Activated CD4-positive, alpha-beta T cell treated with anti-CD3 and anti-CD28 coated beads for 36 hours (primary cell): ENCODE measurements at regions of chr5 and their contacts with region 1.

Region 1: GRCh38 chr5:60699530-60700382 is at the start of gene DEPDC1B:
- DNase-seq: peak; percentile 94
- ATAC-seq: peak; percentile 97
- H3K4me3 Mint-ChIP-seq: peak within 1 kb of the TSS; percentile 84
- H3K27ac Mint-ChIP-seq: peak within 1 kb of the TSS; percentile 88
- H3K4me1 Mint-ChIP-seq: peaks cover 16% of the 10 kb centered on the region
- H3K27me3 Mint-ChIP-seq: peaks cover 2% of the 10 kb centered on the region
- total RNA-seq, gene DEPDC1B: 34.2 to 40.3 TPM

Region 2: GRCh38 chr5:60066502-60066901 is 633.3 kb before region 1 on chr5:
- CTCF ChIA-PET with region 1: no interaction called
- POLR2A ChIA-PET with region 1: no interaction called
- intact Hi-C with region 1: no loop called
- DNase-seq: no peak
- ATAC-seq: no peak
- H3K4me3 Mint-ChIP-seq: no peak overlapping the region
- H3K27ac Mint-ChIP-seq: no peak overlapping the region
- H3K4me1 Mint-ChIP-seq: no peaks in the 10 kb centered on the region
- H3K27me3 Mint-ChIP-seq: no peaks in the 10 kb centered on the region

Region 3: GRCh38 chr5:60843936-60844905 is 144.5 kb after region 1 on chr5 and contains the start of gene ELOVL7:
- CTCF ChIA-PET with region 1: interaction called, 4 read pairs
- POLR2A ChIA-PET with region 1: no interaction called
- intact Hi-C with region 1: loop called (anchors 1 to 5 kb)
- DNase-seq: peak; percentile 79
- ATAC-seq: peak; percentile 95
- H3K4me3 Mint-ChIP-seq: peak within 1 kb of the TSS; percentile 70
- H3K27ac Mint-ChIP-seq: no peak within 1 kb of the TSS
- H3K4me1 Mint-ChIP-seq: peaks cover 7% of the 10 kb centered on the region
- H3K27me3 Mint-ChIP-seq: peaks cover 49% of the 10 kb centered on the region
- total RNA-seq, gene ELOVL7: 0.69 to 0.85 TPM

Region 4: GRCh38 chr5:62278840-62279239 is 1579.1 kb after region 1 on chr5:
- CTCF ChIA-PET with region 1: no interaction called
- POLR2A ChIA-PET with region 1: no interaction called
- intact Hi-C with region 1: loop called in 1 of 2 experiments (anchors 5 kb)
- DNase-seq: no peak
- ATAC-seq: no peak
- H3K4me3 Mint-ChIP-seq: no peak overlapping the region
- H3K27ac Mint-ChIP-seq: no peak overlapping the region
- H3K4me1 Mint-ChIP-seq: peaks cover 33% of the 10 kb centered on the region
- H3K27me3 Mint-ChIP-seq: no peaks in the 10 kb centered on the region